ENCODE measurements at regions of chr7 and their contacts with region 1.

Region 1: GRCh38 chr7:144738708-144739314 is 97.0 kb downstream of the TPK1 start:
- DNase-seq: no peak

Region 2: DNA sequence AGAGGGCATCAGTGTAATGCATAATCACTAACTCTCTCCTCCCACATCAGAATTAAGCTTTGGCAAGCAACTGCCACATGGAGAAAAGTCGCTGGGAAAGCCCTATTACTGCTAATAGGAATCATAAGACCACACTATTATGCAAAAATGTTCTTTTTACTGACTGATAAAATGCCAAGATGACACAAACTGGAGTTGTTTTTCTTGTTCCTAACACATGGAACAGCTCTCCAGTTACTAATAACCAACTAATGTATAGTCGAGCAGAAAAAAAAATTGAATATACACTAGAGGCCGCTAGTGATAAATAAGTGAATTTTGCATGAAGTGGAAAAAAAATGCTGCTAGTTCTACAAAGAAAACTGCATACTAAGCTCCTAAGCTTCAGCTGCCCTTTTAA is 68.6 kb before region 1 on chr7:
- intact Hi-C with region 1: no loop called
- DNase-seq: no peak

Region 3: DNA sequence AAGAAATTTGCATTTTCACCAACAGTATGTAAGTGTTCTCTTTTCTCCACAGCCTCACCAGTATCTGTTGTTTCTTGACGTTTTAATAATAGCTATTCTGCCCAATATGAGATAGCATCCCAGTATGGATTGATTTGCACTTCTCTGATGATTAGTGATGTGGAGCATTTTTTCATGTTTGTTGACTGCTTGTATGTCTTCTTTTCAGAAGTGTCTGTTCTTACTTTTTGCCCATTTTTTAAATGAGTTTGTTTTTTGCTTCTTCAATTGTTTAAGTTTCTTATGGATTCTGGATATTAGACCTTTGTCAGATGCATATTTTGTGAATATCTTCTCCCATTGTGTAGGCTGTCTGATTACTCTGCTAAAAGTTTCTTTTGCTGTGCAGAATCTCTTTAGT is 109.3 kb after region 1 on chr7:
- intact Hi-C with region 1: loop called in 1 of 2 experiments (anchors 5 kb)
- DNase-seq: no peak

Measured in posterior vena cava (tissue), 2 donors.